ENCODE measurements at regions of chr1 and their contacts with region 1.

Region 1: DNA sequence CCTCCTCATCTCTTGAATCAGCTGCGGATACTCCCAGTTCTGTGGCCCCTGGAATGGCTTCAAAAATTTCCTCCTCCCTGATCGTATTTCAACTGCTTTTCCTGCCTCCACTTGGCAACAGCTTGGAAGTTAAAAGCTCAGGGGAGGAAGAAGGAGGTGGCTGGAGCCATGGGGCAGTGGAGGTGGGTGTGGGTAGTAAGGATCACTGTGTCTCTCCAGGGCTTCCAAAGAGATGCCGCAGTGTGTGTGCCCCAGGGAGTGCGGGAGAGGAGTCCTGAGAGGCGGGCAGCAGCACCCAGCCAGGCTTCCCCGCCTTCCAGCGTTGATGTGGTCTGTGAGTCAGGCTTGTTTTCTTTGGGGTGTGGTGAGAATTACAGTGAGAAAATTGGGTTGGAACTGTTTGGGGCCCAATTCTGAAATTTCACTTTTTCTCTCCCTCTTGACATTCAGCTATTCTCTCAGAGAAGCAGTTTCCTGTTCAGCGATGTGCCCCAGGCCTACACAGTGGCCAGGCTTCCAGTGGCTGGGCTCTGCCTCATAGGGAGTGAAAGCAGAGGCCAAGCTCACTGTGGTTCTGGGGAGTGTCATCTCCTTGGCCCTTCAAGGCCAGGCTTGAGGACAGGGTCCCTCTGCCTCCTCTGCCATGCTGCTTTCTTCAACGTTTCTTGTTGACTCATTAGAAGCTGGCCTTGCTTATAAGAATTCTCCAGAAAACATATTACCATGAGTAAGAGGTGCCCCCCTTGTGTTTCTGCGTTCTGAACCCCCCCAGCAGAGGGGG is 69.0 kb downstream of the PGM1 start:
- DNase-seq: peak; percentile 95
- H3K4me3 ChIP-seq: no peak overlapping the region
- H3K27ac ChIP-seq: peak overlapping the region; percentile 99
- H3K4me1 ChIP-seq: peaks cover 51% of the 10 kb centered on the region
- H3K27me3 ChIP-seq: no peaks in the 10 kb centered on the region
- CTCF ChIP-seq: no peak

Region 2: GRCh38 chr1:63630666-63631065 is 31.6 kb before region 1 on chr1:
- CTCF ChIA-PET with region 1: no interaction called
- dilution Hi-C with region 1: no loop called
- in situ Hi-C with region 1: no loop called
- intact Hi-C with region 1: loop called (anchors 2 kb)
- DNase-seq: peak; percentile 42
- H3K4me3 ChIP-seq: no peak overlapping the region
- H3K27ac ChIP-seq: peak overlapping the region; percentile 60
- H3K4me1 ChIP-seq: peaks cover 39% of the 10 kb centered on the region
- H3K27me3 ChIP-seq: no peaks in the 10 kb centered on the region
- CTCF ChIP-seq: no peak

Measured in mammary epithelial cell (primary cell).